Panc1 (cell line): ENCODE measurements at regions of chrX and their contacts with region 1.

Region 1: DNA sequence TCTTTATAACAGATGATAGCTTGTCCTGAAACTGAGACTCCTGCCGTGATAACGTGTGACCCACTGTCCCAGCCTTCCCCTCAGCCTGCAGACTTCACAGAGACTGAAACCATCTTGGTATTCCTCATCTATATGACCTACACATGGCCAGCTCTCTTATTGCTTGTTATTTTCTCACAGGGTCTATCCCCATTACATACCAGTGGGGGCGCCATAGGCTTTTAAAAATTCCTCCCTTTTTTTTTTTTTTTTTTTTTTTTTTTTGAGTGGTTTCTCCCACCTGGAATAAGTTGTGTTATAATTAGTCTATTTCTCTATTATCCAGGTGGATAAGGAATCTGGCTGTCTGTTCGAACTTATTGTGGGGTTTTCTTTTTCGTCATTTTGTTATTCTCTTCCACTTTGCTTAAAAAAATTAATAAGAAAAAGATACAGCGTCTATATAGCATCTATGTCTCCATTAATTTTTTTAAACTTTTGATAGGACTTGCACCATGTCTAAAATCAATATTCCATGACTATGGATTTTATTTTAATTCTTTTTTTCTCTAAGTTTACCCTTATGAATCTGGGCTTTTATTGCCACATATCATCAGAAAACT is 47.2 kb downstream of the GYG2 start:
- DNase-seq: no peak
- ATAC-seq: no peak
- H3K4me3 ChIP-seq: no peak overlapping the region
- H3K27ac ChIP-seq: no peak overlapping the region
- H3K4me1 ChIP-seq: no peaks in the 10 kb centered on the region
- H3K27me3 ChIP-seq: no peaks in the 10 kb centered on the region
- CTCF ChIP-seq: peak; percentile 67

Region 2: GRCh38 chrX:3184176-3184930 is 308.5 kb after region 1 on chrX:
- CTCF ChIA-PET with region 1: no interaction called
- POLR2A ChIA-PET with region 1: no interaction called
- in situ Hi-C with region 1: no loop called
- intact Hi-C with region 1: no loop called
- DNase-seq: no peak
- ATAC-seq: no peak
- H3K4me3 ChIP-seq: no peak overlapping the region
- H3K27ac ChIP-seq: no peak overlapping the region
- H3K4me1 ChIP-seq: no peaks in the 10 kb centered on the region
- H3K27me3 ChIP-seq: no peaks in the 10 kb centered on the region
- CTCF ChIP-seq: no peak

Region 3: DNA sequence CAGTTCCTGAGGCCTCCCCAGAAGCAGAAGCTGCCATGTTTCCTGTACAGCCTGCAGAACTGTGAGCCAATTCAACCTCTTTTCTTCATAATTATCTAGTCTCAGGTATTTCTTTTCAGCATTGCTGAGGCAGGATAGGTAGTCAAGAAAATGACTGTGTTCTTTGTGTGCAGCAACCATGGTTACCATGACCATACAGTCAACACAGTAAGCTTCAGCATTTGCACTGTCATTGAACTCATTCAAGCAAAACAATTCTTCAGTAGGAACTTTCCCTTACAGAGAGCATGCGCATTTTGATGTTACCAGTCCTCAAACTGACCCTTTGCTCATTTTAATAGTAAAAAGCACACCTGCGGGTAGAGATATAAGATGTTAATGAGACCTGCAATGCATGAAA is 656.7 kb after region 1 on chrX:
- CTCF ChIA-PET with region 1: interaction called, 16 read pairs
- POLR2A ChIA-PET with region 1: no interaction called
- in situ Hi-C with region 1: no loop called
- intact Hi-C with region 1: no loop called
- DNase-seq: no peak
- ATAC-seq: no peak
- H3K4me3 ChIP-seq: no peak overlapping the region
- H3K27ac ChIP-seq: no peak overlapping the region
- H3K4me1 ChIP-seq: no peaks in the 10 kb centered on the region
- H3K27me3 ChIP-seq: no peaks in the 10 kb centered on the region
- CTCF ChIP-seq: no peak

Region 4: GRCh38 chrX:4570151-4570550 is 1694.3 kb after region 1 on chrX:
- CTCF ChIA-PET with region 1: interaction called, 15 read pairs
- POLR2A ChIA-PET with region 1: no interaction called
- in situ Hi-C with region 1: no loop called
- intact Hi-C with region 1: no loop called
- DNase-seq: no peak
- ATAC-seq: no peak
- H3K4me3 ChIP-seq: no peak overlapping the region
- H3K27ac ChIP-seq: no peak overlapping the region
- H3K4me1 ChIP-seq: no peaks in the 10 kb centered on the region
- H3K27me3 ChIP-seq: no peaks in the 10 kb centered on the region
- CTCF ChIP-seq: no peak